ENCODE measurements at regions of chr6 and their contacts with region 1.

Region 1: GRCh38 chr6:89371849-89372505 is 19.5 kb upstream of the UBE2J1 start:
- DNase-seq: peak; percentile 64 to 70 (median 69)
- H3K4me3 ChIP-seq: no peak overlapping the region
- H3K4me3 Mint-ChIP-seq: no peak overlapping the region
- H3K27ac ChIP-seq: no peak overlapping the region
- H3K27ac Mint-ChIP-seq: peak overlapping the region in 5 of 7 donors; percentile 24 to 73 (median 56)
- H3K4me1 ChIP-seq: peaks cover 28% of the 10 kb centered on the region
- H3K4me1 Mint-ChIP-seq: peaks cover 16 to 25% (median 23%) of the 10 kb centered on the region in 4 donors
- H3K27me3 ChIP-seq: no peaks in the 10 kb centered on the region
- H3K27me3 Mint-ChIP-seq: no peaks in the 10 kb centered on the region

Region 2: DNA sequence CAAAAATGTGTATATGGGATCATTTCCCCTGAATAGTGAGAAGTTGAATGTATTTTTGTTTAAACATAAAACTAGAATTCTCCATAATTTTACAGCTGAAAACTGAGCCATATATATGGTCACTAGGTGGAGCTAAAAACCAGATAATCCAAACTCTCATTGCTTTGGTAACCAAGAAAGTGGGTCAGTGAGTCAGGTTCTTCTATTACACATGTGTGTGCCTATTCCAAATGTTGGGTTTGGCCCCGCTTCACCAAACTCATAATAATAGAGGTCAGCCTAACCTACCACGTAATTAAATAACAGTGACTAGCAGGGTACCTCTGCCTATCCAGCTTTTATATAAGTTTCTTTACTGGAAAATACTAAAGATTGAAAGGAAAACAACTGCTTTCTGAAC is 389.3 kb before region 1 on chr6:
- CTCF ChIA-PET with region 1: interaction called, 39 read pairs
- POLR2A ChIA-PET with region 1: no interaction called
- intact Hi-C with region 1: loop called (anchors 1 kb)
- DNase-seq: peak in 4 of 5 donors; percentile 55 to 66 (median 62)
- H3K4me3 ChIP-seq: no peak overlapping the region
- H3K4me3 Mint-ChIP-seq: no peak overlapping the region
- H3K27ac ChIP-seq: no peak overlapping the region
- H3K27ac Mint-ChIP-seq: no peak overlapping the region
- H3K4me1 ChIP-seq: no peaks in the 10 kb centered on the region
- H3K4me1 Mint-ChIP-seq: no peaks in the 10 kb centered on the region
- H3K27me3 ChIP-seq: no peaks in the 10 kb centered on the region
- H3K27me3 Mint-ChIP-seq: no peaks in the 10 kb centered on the region

Region 3: DNA sequence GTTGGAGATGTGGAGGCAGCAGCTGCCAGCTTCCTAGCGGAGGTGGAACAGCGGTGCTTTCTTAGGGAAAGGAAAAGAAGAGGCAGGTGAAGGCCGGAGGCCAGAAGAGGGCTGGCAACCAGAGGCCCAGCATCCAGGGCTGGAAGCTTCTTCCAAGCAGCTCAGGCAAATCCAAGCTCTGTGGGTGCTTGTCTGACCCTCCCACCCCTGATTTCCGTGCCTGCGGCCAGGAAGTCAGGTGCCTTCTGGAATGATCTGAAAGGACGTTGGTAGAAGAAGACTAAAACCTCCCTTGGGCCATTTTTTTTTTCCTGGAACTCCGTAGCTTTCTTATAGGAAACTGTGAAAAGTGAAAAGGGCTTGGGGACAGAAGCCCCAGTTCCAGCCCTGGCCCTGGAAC is 121.7 kb before region 1 on chr6:
- CTCF ChIA-PET with region 1: no interaction called
- POLR2A ChIA-PET with region 1: no interaction called
- intact Hi-C with region 1: no loop called
- DNase-seq: no peak
- H3K4me3 ChIP-seq: no peak overlapping the region
- H3K4me3 Mint-ChIP-seq: no peak overlapping the region
- H3K27ac ChIP-seq: no peak overlapping the region
- H3K27ac Mint-ChIP-seq: no peak overlapping the region
- H3K4me1 ChIP-seq: no peaks in the 10 kb centered on the region
- H3K4me1 Mint-ChIP-seq: peaks cover 0 to 3% (median 0%) of the 10 kb centered on the region in 4 donors
- H3K27me3 ChIP-seq: no peaks in the 10 kb centered on the region
- H3K27me3 Mint-ChIP-seq: peaks cover 0 to 9% of the 10 kb centered on the region in 2 donors

Region 4: DNA sequence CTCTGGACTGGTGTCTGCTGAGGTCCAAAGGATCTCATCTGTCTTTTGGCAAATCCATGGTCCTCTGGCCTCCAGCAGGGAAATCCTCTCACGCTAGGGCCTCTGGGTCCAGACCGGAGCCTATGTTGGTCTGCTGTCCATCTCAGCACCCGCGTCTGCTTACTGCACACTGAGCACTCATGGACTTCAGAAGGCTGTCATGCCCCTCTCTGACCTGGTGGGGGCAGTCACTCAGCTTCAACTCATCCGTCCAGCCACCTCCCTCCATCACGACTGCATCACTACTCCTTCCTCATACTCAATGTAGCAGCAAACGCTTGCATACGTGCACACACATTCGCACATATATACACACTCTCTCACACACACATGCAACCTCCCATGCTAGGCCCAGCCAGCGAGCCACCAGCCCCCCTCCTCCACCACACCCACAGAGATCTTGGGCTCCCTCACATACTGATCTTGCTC is 90.2 kb before region 1 on chr6:
- CTCF ChIA-PET with region 1: interaction called, 4 read pairs
- POLR2A ChIA-PET with region 1: no interaction called
- intact Hi-C with region 1: loop called (anchors 5 kb)
- DNase-seq: peak; percentile 30 to 52 (median 41)
- H3K4me3 ChIP-seq: no peak overlapping the region
- H3K4me3 Mint-ChIP-seq: no peak overlapping the region
- H3K27ac ChIP-seq: no peak overlapping the region
- H3K27ac Mint-ChIP-seq: peak overlapping the region in 1 of 7 donors; percentile 52
- H3K4me1 ChIP-seq: no peaks in the 10 kb centered on the region
- H3K4me1 Mint-ChIP-seq: peaks cover 0 to 6% (median 3%) of the 10 kb centered on the region in 4 donors
- H3K27me3 ChIP-seq: no peaks in the 10 kb centered on the region
- H3K27me3 Mint-ChIP-seq: peaks cover 0 to 2% of the 10 kb centered on the region in 2 donors

Region 5: DNA sequence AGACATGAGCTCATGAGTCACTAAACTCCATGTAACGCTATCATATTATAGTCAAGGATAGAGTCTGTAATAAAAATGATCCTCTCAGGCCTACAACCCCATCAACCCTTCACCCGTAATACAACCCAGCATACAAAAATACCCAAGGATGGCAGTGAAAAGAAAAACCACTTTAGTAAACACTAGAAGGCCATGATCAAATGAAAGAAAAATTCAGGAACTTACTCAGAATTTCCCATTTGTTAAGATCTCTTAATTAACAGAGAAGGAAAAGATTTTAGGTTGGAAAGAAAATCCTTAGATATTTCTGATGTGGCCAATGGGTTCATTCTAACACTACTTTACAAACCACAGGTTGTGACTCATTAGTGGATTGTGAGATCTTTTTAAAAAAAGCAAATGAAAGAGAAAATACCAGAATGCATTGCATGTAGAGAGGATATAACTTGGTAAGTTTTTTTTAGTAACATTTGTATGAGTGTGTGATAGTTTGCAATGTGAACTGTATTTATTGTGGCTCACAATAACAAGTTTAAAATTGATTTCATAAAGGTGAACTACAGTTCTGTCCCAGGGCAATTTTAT is 11.5 kb before region 1 on chr6:
- CTCF ChIA-PET with region 1: interaction called, 85 read pairs
- POLR2A ChIA-PET with region 1: interaction called, 8 read pairs
- intact Hi-C with region 1: loop called (anchors 2 kb)
- DNase-seq: peak in 1 of 5 donors; percentile 3
- H3K4me3 ChIP-seq: no peak overlapping the region
- H3K4me3 Mint-ChIP-seq: peak overlapping the region in 4 of 8 donors; percentile 0 to 26 (median 6)
- H3K27ac ChIP-seq: no peak overlapping the region
- H3K27ac Mint-ChIP-seq: peak overlapping the region in 3 of 7 donors; percentile 18 to 62 (median 49)
- H3K4me1 ChIP-seq: peaks cover 34% of the 10 kb centered on the region
- H3K4me1 Mint-ChIP-seq: peaks cover 26 to 62% (median 38%) of the 10 kb centered on the region in 4 donors
- H3K27me3 ChIP-seq: no peaks in the 10 kb centered on the region
- H3K27me3 Mint-ChIP-seq: no peaks in the 10 kb centered on the region

Region 6: GRCh38 chr6:89432875-89433251 is 60.9 kb after region 1 on chr6 and contains the start of gene ANKRD6:
- CTCF ChIA-PET with region 1: interaction called, 15 read pairs
- POLR2A ChIA-PET with region 1: no interaction called
- intact Hi-C with region 1: loop called (anchors 5 kb)
- DNase-seq: peak; percentile 68 to 86 (median 80)
- H3K4me3 ChIP-seq: peak within 1 kb of the TSS; percentile 39 to 44
- H3K4me3 Mint-ChIP-seq: peak within 1 kb of the TSS; percentile 88 to 93 (median 90)
- H3K27ac ChIP-seq: peak within 1 kb of the TSS; percentile 37
- H3K27ac Mint-ChIP-seq: peak within 1 kb of the TSS; percentile 47 to 90 (median 86)
- H3K4me1 ChIP-seq: peaks cover 10% of the 10 kb centered on the region
- H3K4me1 Mint-ChIP-seq: peaks cover 16 to 34% (median 24%) of the 10 kb centered on the region in 4 donors
- H3K27me3 ChIP-seq: no peaks in the 10 kb centered on the region
- H3K27me3 Mint-ChIP-seq: peaks cover 3 to 4% of the 10 kb centered on the region in 2 donors
- total RNA-seq, gene ANKRD6: 4.4 to 5.8 TPM